ENCODE measurements at regions of chr1 and their contacts with region 1.

Region 1: GRCh38 chr1:165836664-165837482 is 9.5 kb downstream of the UCK2 start:
- DNase-seq: no peak
- ATAC-seq: no peak

Region 2: DNA sequence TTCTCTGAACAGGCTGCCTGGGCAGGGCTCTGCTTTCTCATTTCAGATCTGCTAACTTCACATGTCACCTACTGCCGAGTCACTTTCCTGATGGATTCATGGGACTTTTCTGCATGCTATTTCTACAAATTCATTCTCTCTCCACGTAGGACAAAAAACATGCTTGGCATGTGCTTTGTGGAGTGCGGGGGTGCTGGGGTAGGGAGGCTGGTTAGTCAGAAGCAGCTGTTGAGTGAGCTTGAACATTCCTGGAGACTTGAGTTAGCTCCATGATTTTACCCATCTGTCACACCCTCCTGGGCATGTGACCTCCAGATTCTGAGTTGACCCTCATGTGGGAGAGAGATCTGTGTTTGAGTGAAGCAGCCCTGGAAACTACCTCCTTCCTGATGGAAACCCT is 62.0 kb after region 1 on chr1:
- intact Hi-C with region 1: loop called in 1 of 2 experiments (anchors 10 kb)
- DNase-seq: no peak
- ATAC-seq: peak; percentile 64 to 84

Region 3: DNA sequence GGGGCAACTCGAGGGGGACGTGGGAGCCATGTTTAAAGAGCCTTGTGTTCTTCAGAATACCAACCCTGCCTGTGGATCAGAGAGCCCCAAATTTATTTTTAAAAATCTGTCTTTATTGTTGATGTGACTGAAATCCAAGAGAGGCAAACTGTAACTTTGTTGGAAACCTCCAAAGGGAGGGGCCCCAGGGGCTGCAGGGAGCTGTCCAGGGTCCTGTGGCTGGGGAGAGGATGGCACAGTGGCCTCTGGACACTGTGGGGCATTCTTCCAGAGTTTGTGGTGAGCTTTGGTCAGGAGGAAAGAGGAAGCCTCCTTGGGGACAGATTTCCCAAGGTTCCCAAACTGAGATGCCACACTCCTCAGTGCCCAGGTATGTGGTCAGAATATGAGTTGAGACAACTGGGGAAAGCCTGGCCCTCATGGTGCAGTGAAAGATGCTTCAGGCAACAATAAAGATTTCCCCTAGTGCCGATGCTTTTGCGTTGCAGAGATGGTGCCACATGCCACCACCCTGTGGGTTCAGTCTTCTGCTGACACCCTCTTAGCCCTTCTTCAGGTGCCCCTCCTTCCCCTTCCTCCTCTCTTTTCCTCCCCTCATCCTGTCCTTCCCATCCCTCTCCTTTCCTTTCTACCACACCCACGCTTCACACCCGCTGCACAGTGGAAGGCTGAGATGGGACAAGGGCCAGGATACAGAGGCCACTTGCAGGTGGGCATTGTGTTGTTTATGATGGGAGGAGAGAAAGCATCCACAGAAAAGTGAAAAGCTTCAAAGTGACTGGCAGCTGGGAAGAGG is 112.7 kb after region 1 on chr1:
- intact Hi-C with region 1: no loop called
- DNase-seq: no peak
- ATAC-seq: no peak